ENCODE measurements at regions of chr11 and their contacts with region 1.

Region 1: DNA sequence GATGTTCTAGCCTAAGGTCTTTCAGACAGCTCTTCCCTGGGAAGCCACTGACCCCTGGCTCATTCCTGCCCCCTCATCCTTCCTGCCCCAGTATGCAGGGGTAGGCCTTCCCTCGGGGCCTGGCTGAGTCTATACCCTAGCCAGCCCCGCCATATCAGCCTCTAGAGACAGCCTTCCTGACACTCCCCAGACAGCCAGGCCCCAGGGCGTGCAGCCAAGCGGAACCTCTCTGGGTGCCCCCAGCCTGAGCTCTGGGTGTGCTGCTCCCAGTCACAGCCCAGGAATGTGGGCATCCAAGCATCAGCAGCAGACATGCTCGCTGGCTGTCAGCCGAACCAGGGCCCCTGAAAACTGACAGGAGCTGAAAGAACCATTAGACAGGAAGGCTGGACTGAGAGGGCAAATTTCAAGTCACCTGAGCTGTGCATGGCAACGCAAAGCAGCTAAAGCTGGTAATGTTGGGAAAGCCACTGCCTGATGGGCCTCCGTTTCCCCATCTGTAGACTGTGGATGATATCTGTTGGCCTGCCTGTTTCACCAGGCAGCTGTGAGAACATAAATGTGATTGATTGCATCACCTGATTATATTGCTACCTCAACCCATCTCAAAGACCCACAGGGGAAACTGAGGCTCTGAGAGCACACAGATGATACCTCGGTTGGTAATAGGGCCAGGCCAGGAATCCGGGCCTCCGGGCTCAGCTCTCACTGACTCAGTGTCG is 93.2 kb downstream of the LRRC32 start:
- DNase-seq: peak; percentile 92
- H3K4me3 ChIP-seq: no peak overlapping the region
- H3K27ac ChIP-seq: peak overlapping the region; percentile 57 to 71 (median 67)
- H3K4me1 ChIP-seq: peaks cover 0 to 45% (median 25%) of the 10 kb centered on the region in 4 donors
- H3K27me3 ChIP-seq: no peaks in the 10 kb centered on the region
- CTCF ChIP-seq: no peak
- EP300 ChIP-seq: peak in 2 of 4 donors; percentile 20 to 67
- POLR2A ChIP-seq: no peak

Region 2: DNA sequence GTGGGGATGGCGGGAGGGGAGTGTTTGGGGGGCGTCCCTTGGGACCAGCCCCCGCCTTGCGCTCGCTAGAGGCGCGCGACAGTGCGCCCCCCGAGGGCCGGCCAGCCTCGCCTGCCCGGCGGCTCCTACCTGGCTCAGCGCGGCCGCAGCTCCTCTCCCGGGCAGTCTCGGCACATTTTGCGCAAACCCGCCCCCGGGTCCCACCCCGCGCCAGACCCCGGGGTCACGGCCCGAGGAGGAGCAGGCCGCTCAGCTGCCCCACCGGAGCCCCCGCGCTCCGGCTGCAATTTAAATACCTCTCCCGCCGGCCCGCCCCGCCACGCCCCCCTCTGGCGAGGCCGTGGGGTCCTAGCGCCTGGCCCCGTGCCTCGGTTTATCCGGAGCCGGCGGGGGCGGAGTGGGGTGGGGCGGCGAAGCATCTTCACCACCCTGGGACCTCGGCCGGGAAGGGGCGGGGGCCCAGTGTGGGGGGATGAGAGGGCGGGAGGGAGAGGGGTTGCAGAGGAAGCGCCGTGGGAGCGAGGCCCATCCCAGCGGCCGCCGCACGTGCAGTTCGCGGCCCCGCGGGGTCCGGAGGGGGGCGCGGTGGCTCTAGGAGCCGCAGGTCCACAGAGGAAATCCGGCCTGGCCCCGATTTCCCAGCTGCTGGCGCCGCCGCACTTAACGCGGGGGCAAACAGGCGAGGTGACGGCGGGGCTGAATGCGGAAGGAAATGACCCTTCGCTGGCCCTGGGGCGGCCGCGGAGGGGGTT is 93.3 kb after region 1 on chr11 and contains the start of gene LRRC32:
- intact Hi-C with region 1: loop called (anchors 5 kb)
- DNase-seq: peak; percentile 77
- H3K4me3 ChIP-seq: peak within 1 kb of the TSS; percentile 31 to 57 (median 49)
- H3K27ac ChIP-seq: peak within 1 kb of the TSS; percentile 43 to 76 (median 68)
- H3K4me1 ChIP-seq: peaks cover 0 to 24% (median 15%) of the 10 kb centered on the region in 4 donors
- H3K27me3 ChIP-seq: peaks cover 6 to 25% (median 8%) of the 10 kb centered on the region in 3 donors
- CTCF ChIP-seq: no peak
- EP300 ChIP-seq: no peak
- POLR2A ChIP-seq: no peak
- total RNA-seq, gene LRRC32: 6.4 to 30.7 (median 16.2) TPM